ENCODE measurements at regions of chr15 and their contacts with region 1.

Region 1: GRCh38 chr15:99076552-99077308 is 28.1 kb upstream of the SYNM start:
- DNase-seq: peak; percentile 60
- ATAC-seq: peak; percentile 88
- H3K4me3 Mint-ChIP-seq: peak overlapping the region; percentile 63
- H3K27ac Mint-ChIP-seq: no peak overlapping the region
- H3K4me1 Mint-ChIP-seq: peaks cover 5% of the 10 kb centered on the region
- H3K27me3 Mint-ChIP-seq: peaks cover 17% of the 10 kb centered on the region

Region 2: GRCh38 chr15:98647774-98648653 is 428.7 kb before region 1 on chr15 and contains the start of gene IGF1R:
- CTCF ChIA-PET with region 1: interaction called, 12 read pairs
- POLR2A ChIA-PET with region 1: no interaction called
- DNase-seq: peak; percentile 86
- ATAC-seq: peak; percentile 62
- H3K4me3 Mint-ChIP-seq: peak within 1 kb of the TSS; percentile 81
- H3K27ac Mint-ChIP-seq: peak within 1 kb of the TSS; percentile 81
- H3K4me1 Mint-ChIP-seq: peaks cover 31% of the 10 kb centered on the region
- H3K27me3 Mint-ChIP-seq: peaks cover 42% of the 10 kb centered on the region
- total RNA-seq, gene IGF1R: 9.1 to 10.6 TPM

Region 3: DNA sequence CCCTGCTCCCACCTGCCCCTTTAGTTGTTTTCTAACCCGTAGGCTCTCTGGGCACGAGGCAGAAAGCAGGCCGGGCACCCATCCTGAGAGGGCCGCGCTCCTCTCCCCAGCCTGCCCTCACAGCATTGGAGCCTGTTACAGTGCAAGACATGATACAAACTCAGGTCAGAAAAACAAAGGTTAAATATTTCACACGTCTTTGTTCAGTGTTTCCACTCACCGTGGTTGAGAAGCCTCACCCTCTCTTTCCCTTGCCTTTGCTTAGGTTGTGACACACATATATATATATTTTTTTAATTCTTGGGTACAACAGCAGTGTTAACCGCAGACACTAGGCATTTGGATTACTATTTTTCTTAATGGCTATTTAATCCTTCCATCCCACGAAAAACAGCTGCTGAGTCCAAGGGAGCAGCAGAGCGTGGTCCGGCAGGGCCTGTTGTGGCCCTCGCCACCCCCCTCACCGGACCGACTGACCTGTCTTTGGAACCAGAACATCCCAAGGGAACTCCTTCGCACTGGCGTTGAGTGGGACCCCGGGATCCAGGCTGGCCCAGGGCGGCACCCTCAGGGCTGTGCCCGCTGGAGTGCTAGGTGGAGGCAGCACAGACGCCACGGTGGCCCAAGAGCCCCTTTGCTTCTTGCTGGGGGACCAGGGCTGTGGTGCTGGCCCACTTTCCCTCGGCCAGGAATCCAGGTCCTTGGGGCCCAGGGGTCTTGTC is 117.7 kb before region 1 on chr15:
- CTCF ChIA-PET with region 1: no interaction called
- POLR2A ChIA-PET with region 1: no interaction called
- DNase-seq: no peak
- ATAC-seq: no peak
- H3K4me3 Mint-ChIP-seq: no peak overlapping the region
- H3K27ac Mint-ChIP-seq: no peak overlapping the region
- H3K4me1 Mint-ChIP-seq: peaks cover 6% of the 10 kb centered on the region
- H3K27me3 Mint-ChIP-seq: no peaks in the 10 kb centered on the region

Region 4: GRCh38 chr15:99059010-99059981 is 17.4 kb before region 1 on chr15:
- CTCF ChIA-PET with region 1: interaction called, 17 read pairs
- POLR2A ChIA-PET with region 1: no interaction called
- DNase-seq: peak; percentile 45
- ATAC-seq: peak; percentile 84
- H3K4me3 Mint-ChIP-seq: peak overlapping the region; percentile 62
- H3K27ac Mint-ChIP-seq: no peak overlapping the region
- H3K4me1 Mint-ChIP-seq: peaks cover 9% of the 10 kb centered on the region
- H3K27me3 Mint-ChIP-seq: peaks cover 34% of the 10 kb centered on the region

Region 5: DNA sequence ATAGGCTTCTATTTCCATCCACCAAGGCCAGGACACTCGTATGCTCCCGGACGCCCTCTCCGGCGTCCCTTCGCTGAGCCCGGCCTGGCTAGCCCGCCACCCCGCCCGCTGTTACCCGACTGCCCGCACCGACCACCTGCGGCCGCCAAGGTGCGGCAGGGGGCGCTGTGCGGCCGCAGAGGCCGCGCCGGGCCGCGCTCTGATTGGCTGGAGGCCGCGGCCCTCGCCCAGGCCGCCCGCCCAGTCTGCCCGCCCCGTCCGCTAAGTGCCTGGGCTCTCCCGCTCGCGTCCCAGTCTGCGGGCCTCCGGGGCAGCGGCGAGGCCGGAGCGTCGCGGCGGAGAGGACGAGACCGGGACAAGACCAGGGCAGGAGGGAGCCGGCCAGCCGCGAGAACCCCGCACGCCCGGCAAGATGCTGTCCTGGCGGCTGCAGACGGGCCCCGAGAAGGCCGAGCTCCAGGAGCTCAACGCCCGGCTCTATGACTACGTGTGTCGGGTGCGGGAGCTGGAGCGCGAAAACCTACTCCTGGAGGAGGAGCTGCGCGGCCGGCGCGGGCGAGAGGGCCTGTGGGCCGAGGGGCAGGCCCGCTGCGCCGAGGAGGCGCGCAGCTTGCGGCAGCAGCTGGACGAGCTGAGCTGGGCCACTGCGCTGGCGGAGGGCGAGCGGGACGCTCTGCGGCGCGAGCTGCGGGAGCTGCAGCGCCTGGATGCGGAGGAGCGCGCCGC is 28.2 kb after region 1 on chr15 and contains the start of gene SYNM:
- CTCF ChIA-PET with region 1: interaction called, 13 read pairs
- POLR2A ChIA-PET with region 1: no interaction called
- DNase-seq: peak; percentile 29
- ATAC-seq: peak; percentile 50
- H3K4me3 Mint-ChIP-seq: peak within 1 kb of the TSS; percentile 59
- H3K27ac Mint-ChIP-seq: no peak within 1 kb of the TSS
- H3K4me1 Mint-ChIP-seq: peaks cover 28% of the 10 kb centered on the region
- H3K27me3 Mint-ChIP-seq: peaks cover 54% of the 10 kb centered on the region
- total RNA-seq, gene SYNM: 0.18 to 0.29 TPM

Region 6: GRCh38 chr15:99163271-99164062 is 86.7 kb after region 1 on chr15:
- CTCF ChIA-PET with region 1: no interaction called
- POLR2A ChIA-PET with region 1: no interaction called
- DNase-seq: no peak
- ATAC-seq: no peak
- H3K4me3 Mint-ChIP-seq: no peak overlapping the region
- H3K27ac Mint-ChIP-seq: no peak overlapping the region
- H3K4me1 Mint-ChIP-seq: no peaks in the 10 kb centered on the region
- H3K27me3 Mint-ChIP-seq: no peaks in the 10 kb centered on the region

Measured in activated CD8-positive, alpha-beta T cell treated with anti-CD3 and anti-CD28 coated beads, Interleukin-2, amount 10 ng/mL, durations not matched to agents 7 days and 5 days (primary cell).